CD4-positive, alpha-beta memory T cell (primary cell): ENCODE measurements at regions of chr1 and their contacts with region 1.

Region 1: DNA sequence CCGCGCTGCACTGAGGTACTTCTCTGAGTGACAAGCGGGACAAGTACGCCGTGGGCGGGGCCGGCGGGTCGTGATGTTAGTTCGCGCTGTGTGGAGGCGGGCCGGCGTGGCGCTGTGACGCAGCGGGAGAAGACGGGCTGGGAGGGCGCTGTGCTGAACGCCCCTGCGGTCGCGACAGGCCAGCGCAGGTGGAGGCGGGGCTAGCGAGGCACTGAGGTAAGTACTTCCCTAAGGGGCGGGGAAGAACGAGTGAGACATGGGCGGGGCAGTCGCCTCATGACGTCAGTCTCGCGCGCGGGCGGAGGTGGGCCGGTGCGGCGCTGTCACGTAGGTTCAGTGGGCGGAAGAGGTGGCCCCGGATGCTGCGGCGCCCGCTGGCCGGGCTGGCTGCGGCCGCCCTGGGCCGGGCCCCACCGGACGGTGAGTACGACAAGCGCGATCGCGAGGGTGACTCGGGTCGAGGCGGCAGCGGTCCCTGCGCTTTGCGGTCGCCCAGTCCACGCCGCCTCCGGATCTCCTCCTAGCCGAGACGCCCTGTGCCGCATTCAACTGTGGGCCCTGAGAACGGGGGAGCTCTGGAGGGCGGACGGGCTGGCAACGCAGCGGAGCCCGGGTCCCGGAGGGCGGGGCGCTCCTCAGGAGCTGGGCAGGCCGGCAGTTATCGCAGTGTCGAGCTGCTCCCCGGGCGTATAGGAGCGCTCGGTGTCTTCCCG is at the start of gene GUK1:
- DNase-seq: peak; percentile 100
- H3K4me3 ChIP-seq: peak within 1 kb of the TSS; percentile 94 to 99
- H3K4me3 Mint-ChIP-seq: peak within 1 kb of the TSS; percentile 92 to 97 (median 96)
- H3K27ac ChIP-seq: peak within 1 kb of the TSS; percentile 98
- H3K27ac Mint-ChIP-seq: peak within 1 kb of the TSS; percentile 91 to 100 (median 100)
- H3K4me1 ChIP-seq: peaks cover 47% of the 10 kb centered on the region
- H3K4me1 Mint-ChIP-seq: peaks cover 14 to 47% (median 35%) of the 10 kb centered on the region in 4 donors
- H3K27me3 ChIP-seq: no peaks in the 10 kb centered on the region
- H3K27me3 Mint-ChIP-seq: peaks cover 0 to 7% of the 10 kb centered on the region in 2 donors
- total RNA-seq, gene GUK1: 179 to 185 TPM

Region 2: GRCh38 chr1:227734856-227735538 is 405.1 kb before region 1 on chr1 and contains the starts of genes JMJD4 and SNAP47:
- CTCF ChIA-PET with region 1: no interaction called
- POLR2A ChIA-PET with region 1: no interaction called
- intact Hi-C with region 1: loop called (anchors 1 kb)
- DNase-seq: peak; percentile 88 to 97 (median 93)
- H3K4me3 ChIP-seq: peak within 1 kb of the TSS; percentile 69 to 80
- H3K4me3 Mint-ChIP-seq: peak within 1 kb of the TSS; percentile 89 to 93 (median 90)
- H3K27ac ChIP-seq: peak within 1 kb of the TSS; percentile 84
- H3K27ac Mint-ChIP-seq: peak within 1 kb of the TSS; percentile 88 to 94 (median 90)
- H3K4me1 ChIP-seq: peaks cover 39% of the 10 kb centered on the region
- H3K4me1 Mint-ChIP-seq: peaks cover 26 to 65% (median 39%) of the 10 kb centered on the region in 4 donors
- H3K27me3 ChIP-seq: no peaks in the 10 kb centered on the region
- H3K27me3 Mint-ChIP-seq: peaks cover 0 to 1% of the 10 kb centered on the region in 2 donors
- total RNA-seq, gene JMJD4: 32.4 to 34.1 TPM
- total RNA-seq, gene SNAP47: 27.0 to 30.5 TPM

Region 3: DNA sequence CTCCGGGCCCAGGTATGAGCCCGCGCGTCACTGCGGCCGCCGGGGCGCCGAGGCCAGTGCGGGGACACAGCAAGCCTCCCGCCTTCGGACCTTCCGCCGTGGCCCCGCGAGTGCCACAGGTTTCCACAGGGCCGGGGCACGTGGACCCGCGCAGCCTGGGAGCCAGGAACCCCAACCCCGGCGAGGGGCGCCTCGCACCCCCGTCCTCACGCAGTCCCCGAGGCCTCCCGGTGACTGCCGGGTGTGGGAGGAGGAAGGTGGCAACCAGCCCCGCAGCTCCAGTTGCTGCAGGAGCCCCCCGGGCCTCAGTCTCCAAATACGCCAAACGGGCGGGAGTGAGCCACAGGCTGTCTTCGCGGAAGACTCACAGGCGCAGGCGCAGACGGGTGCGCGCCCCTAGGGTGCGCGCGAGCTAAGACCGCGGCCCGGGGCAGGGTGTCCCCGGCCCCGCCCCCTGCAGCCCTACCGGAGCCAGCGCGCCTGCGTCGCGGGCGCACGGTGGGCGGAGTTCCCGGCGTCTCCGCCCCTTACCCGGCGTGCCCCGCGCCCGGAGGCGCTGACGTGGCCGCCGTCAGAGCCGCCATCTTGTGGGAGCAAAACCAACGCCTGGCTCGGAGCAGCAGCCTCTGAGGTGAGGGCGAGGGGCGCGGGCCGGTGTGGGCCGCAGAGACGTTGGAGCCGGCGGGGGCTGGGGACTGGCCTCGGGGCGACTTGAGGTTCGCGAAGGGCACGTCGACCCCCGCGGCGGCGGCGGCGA is 57.8 kb before region 1 on chr1 and contains the start of gene ARF1:
- CTCF ChIA-PET with region 1: no interaction called
- POLR2A ChIA-PET with region 1: interaction called, 15 read pairs
- intact Hi-C with region 1: loop called (anchors 1 kb)
- DNase-seq: peak; percentile 88 to 97 (median 95)
- H3K4me3 ChIP-seq: peak within 1 kb of the TSS; percentile 80 to 97
- H3K4me3 Mint-ChIP-seq: peak within 1 kb of the TSS; percentile 90 to 96 (median 94)
- H3K27ac ChIP-seq: peak within 1 kb of the TSS; percentile 97
- H3K27ac Mint-ChIP-seq: peak within 1 kb of the TSS; percentile 95 to 99 (median 97)
- H3K4me1 ChIP-seq: peaks cover 53% of the 10 kb centered on the region
- H3K4me1 Mint-ChIP-seq: peaks cover 35 to 56% (median 45%) of the 10 kb centered on the region in 4 donors
- H3K27me3 ChIP-seq: no peaks in the 10 kb centered on the region
- H3K27me3 Mint-ChIP-seq: no peaks in the 10 kb centered on the region
- total RNA-seq, gene ARF1: 265 to 270 TPM

Region 4: GRCh38 chr1:228102791-228103620 is 37.1 kb before region 1 on chr1 and contains the start of gene C1orf35:
- CTCF ChIA-PET with region 1: no interaction called
- POLR2A ChIA-PET with region 1: interaction called, 18 read pairs
- intact Hi-C with region 1: loop called (anchors 1 kb)
- DNase-seq: peak; percentile 93 to 95 (median 94)
- H3K4me3 ChIP-seq: peak within 1 kb of the TSS; percentile 54 to 98
- H3K4me3 Mint-ChIP-seq: peak within 1 kb of the TSS; percentile 90 to 95 (median 94)
- H3K27ac ChIP-seq: peak within 1 kb of the TSS; percentile 85
- H3K27ac Mint-ChIP-seq: peak within 1 kb of the TSS; percentile 93 to 97 (median 97)
- H3K4me1 ChIP-seq: peaks cover 25% of the 10 kb centered on the region
- H3K4me1 Mint-ChIP-seq: peaks cover 6 to 61% (median 33%) of the 10 kb centered on the region in 4 donors
- H3K27me3 ChIP-seq: no peaks in the 10 kb centered on the region
- H3K27me3 Mint-ChIP-seq: no peaks in the 10 kb centered on the region
- total RNA-seq, gene C1orf35: 28.5 to 30.7 TPM

Region 5: DNA sequence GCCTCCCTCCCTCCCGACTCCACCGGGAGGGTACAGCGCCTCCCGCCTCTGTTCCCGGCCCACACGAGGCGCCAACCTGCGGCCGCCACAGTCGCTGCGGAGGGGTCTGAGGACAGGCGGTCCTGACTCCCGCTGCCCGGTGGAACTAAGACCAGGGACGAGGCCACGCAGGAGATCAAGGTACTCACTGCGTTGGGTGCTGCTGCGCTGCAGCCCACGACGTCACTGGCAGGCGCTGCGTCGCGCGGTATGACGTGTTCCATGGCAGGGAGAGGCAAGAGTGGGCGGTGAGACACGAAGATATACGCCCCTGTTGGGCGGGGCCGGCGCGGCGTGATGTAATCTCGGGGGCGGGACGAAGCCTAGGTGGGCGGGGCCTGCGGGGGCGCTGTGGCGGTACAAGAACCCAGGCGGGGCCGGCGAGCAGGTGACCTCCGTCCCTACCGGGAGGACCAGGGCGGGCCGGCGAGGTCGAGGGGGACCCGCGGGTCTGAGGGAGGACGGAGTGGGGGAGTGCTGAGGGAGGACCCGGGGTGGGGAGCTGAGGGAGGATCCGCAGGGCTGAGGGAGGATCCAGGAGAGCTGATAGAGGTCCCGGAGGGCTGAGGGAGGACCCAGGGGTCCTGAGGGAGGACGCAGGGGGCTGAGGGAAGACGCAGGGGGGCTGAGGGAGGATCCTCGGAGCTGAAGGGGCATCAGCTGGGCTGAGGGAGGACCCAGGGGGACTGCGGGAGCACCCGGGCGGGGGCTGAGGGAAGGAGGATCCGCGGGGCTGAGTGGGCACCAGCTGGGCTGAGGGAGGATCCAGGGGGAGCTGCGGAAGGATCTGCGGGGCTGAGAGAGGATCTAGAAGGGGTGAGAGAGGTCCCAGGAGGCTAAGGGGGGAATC is 30.8 kb before region 1 on chr1 and contains the start of gene MRPL55:
- CTCF ChIA-PET with region 1: interaction called, 3 read pairs
- POLR2A ChIA-PET with region 1: interaction called, 18 read pairs
- intact Hi-C with region 1: loop called (anchors 1 kb)
- DNase-seq: peak; percentile 97 to 99 (median 98)
- H3K4me3 ChIP-seq: peak within 1 kb of the TSS; percentile 68 to 76
- H3K4me3 Mint-ChIP-seq: peak within 1 kb of the TSS; percentile 89 to 98 (median 94)
- H3K27ac ChIP-seq: peak within 1 kb of the TSS; percentile 92
- H3K27ac Mint-ChIP-seq: peak within 1 kb of the TSS; percentile 92 to 98 (median 95)
- H3K4me1 ChIP-seq: peaks cover 21% of the 10 kb centered on the region
- H3K4me1 Mint-ChIP-seq: peaks cover 9 to 45% (median 26%) of the 10 kb centered on the region in 4 donors
- H3K27me3 ChIP-seq: no peaks in the 10 kb centered on the region
- H3K27me3 Mint-ChIP-seq: no peaks in the 10 kb centered on the region
- total RNA-seq, gene MRPL55: 57.8 to 64.5 TPM

Region 6: DNA sequence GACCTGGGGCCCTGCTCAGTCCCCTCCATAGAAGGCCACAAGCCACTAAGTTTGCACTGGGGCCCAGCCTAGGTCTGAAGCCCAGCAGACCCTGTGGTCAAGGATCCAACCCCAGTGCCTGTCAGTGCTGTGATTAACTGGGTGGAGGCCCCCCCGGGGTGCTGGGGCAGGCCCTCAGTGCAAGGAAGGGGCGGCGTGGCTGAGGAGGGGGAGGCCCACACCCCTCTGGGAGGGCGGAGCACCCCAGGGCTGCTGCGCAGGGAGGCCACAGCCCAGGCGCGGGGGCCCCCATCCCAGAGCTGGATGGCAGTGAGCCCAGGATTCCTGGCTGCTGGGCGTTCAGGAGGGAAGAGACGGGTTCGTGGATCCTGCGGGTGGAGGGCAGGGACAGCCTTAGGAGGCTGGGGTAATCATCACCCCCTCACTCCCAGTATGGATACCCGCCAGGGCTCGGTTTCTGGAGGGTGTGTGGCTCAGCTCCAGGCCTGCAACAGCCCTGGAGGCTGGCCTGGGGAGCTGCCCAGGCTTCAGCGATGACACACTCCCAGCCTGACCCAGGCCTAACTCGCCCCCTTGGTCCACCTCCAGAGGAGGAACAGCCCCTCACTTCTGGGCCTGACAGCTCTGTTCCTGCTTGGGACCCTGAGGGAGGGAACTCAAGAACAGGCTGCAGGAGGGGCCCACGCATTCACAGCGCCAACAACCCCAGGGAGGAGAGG is 10.5 kb after region 1 on chr1:
- CTCF ChIA-PET with region 1: no interaction called
- POLR2A ChIA-PET with region 1: interaction called, 20 read pairs
- intact Hi-C with region 1: no loop called
- DNase-seq: peak in 1 of 5 donors; percentile 36
- H3K4me3 ChIP-seq: no peak overlapping the region
- H3K4me3 Mint-ChIP-seq: no peak overlapping the region
- H3K27ac ChIP-seq: no peak overlapping the region
- H3K27ac Mint-ChIP-seq: peak overlapping the region in 1 of 7 donors; percentile 35
- H3K4me1 ChIP-seq: peaks cover under 1% of the 10 kb centered on the region
- H3K4me1 Mint-ChIP-seq: peaks cover 0 to 4% (median 1%) of the 10 kb centered on the region in 4 donors
- H3K27me3 ChIP-seq: no peaks in the 10 kb centered on the region
- H3K27me3 Mint-ChIP-seq: no peaks in the 10 kb centered on the region

Region 7: GRCh38 chr1:228434686-228435085 is 294.6 kb after region 1 on chr1:
- CTCF ChIA-PET with region 1: no interaction called
- POLR2A ChIA-PET with region 1: no interaction called
- intact Hi-C with region 1: no loop called
- DNase-seq: no peak
- H3K4me3 ChIP-seq: no peak overlapping the region
- H3K4me3 Mint-ChIP-seq: no peak overlapping the region
- H3K27ac ChIP-seq: no peak overlapping the region
- H3K27ac Mint-ChIP-seq: no peak overlapping the region
- H3K4me1 ChIP-seq: peaks cover 10% of the 10 kb centered on the region
- H3K4me1 Mint-ChIP-seq: peaks cover 1 to 5% (median 3%) of the 10 kb centered on the region in 4 donors
- H3K27me3 ChIP-seq: no peaks in the 10 kb centered on the region
- H3K27me3 Mint-ChIP-seq: peaks cover 18 to 26% of the 10 kb centered on the region in 2 donors